ENCODE measurements at regions of chr19 and their contacts with region 1.

Region 1: GRCh38 chr19:51168564-51169282 is 26.6 kb downstream of the SIGLEC7 start:
- DNase-seq: no peak
- H3K4me3 Mint-ChIP-seq: no peak overlapping the region
- H3K27ac Mint-ChIP-seq: no peak overlapping the region
- H3K4me1 Mint-ChIP-seq: no peaks in the 10 kb centered on the region
- H3K27me3 Mint-ChIP-seq: no peaks in the 10 kb centered on the region
- CTCF ChIP-seq: no peak

Region 2: GRCh38 chr19:51016798-51017683 is 151.7 kb before region 1 on chr19:
- CTCF ChIA-PET with region 1: interaction called, 11 read pairs
- POLR2A ChIA-PET with region 1: no interaction called
- intact Hi-C with region 1: loop called (anchors 1 kb)
- DNase-seq: no peak
- H3K4me3 Mint-ChIP-seq: peak overlapping the region; percentile 3
- H3K27ac Mint-ChIP-seq: no peak overlapping the region
- H3K4me1 Mint-ChIP-seq: peaks cover 7% of the 10 kb centered on the region
- H3K27me3 Mint-ChIP-seq: peaks cover 40% of the 10 kb centered on the region
- CTCF ChIP-seq: peak; percentile 59

Region 3: DNA sequence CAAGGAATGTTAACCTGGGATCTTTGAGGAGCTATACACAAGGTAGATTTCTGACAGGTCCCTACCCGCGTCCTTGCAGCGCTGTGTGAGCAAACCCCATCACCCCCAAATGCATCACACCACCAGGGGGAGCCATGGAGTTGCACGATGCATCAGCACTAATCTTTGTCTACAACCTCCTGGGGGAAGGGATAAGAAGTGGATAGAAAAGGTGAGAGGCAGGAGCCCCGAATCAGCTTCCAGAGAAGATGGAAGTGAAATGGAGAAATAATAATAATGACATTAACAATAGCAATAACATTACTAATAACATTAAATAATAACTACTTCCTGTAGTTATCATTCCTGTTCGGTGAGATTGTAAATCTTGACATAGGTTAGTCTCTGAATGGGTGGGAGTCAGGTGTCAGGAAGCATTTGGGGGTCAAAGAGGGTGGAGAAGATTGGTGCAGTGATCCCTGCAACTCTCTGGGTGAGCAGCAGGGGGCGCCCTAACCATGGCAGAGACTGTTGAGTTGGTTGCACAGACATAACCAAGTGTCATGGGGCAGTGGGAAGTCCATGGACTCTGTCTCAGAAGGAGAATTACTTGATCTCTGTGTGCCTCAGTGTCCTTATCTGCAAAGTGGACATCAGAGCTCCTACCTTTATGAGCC is 10.1 kb before region 1 on chr19:
- CTCF ChIA-PET with region 1: interaction called, 16 read pairs
- POLR2A ChIA-PET with region 1: no interaction called
- intact Hi-C with region 1: no loop called
- DNase-seq: peak; percentile 37
- H3K4me3 Mint-ChIP-seq: no peak overlapping the region
- H3K27ac Mint-ChIP-seq: no peak overlapping the region
- H3K4me1 Mint-ChIP-seq: no peaks in the 10 kb centered on the region
- H3K27me3 Mint-ChIP-seq: no peaks in the 10 kb centered on the region
- CTCF ChIP-seq: peak; percentile 42

Measured in MCF 10A (cell line).